T-cell (primary cell): ENCODE measurements at regions of chr1 and their contacts with region 1.

Region 1: GRCh38 chr1:182588500-182589452 is at the start of gene RNASEL:
- DNase-seq: peak; percentile 20 to 82 (median 48)
- ATAC-seq: peak; percentile 88 to 90 (median 89)
- H3K4me3 ChIP-seq: peak within 1 kb of the TSS; percentile 68 to 100
- H3K4me3 Mint-ChIP-seq: peak within 1 kb of the TSS; percentile 94 to 100 (median 98)
- H3K27ac ChIP-seq: peak within 1 kb of the TSS; percentile 93
- H3K27ac Mint-ChIP-seq: peak within 1 kb of the TSS; percentile 100
- H3K4me1 ChIP-seq: peaks cover 7 to 33% of the 10 kb centered on the region in 2 experiments
- H3K4me1 Mint-ChIP-seq: peaks cover 46 to 57% (median 54%) of the 10 kb centered on the region in 3 donors
- H3K27me3 ChIP-seq: no peaks in the 10 kb centered on the region
- H3K27me3 Mint-ChIP-seq: no peaks in the 10 kb centered on the region
- total RNA-seq, gene RNASEL: 10.5 to 20.8 (median 18.7) TPM

Region 2: GRCh38 chr1:182781841-182782586 is 193.2 kb after region 1 on chr1:
- CTCF ChIA-PET with region 1: interaction called, 161 to 257 read pairs
- POLR2A ChIA-PET with region 1: interaction called, 3 read pairs
- DNase-seq: peak; percentile 29 to 77 (median 52)
- ATAC-seq: peak; percentile 65 to 83 (median 82)
- H3K4me3 ChIP-seq: no peak overlapping the region
- H3K4me3 Mint-ChIP-seq: no peak overlapping the region
- H3K27ac ChIP-seq: no peak overlapping the region
- H3K27ac Mint-ChIP-seq: no peak overlapping the region
- H3K4me1 ChIP-seq: no peaks in the 10 kb centered on the region
- H3K4me1 Mint-ChIP-seq: peaks cover 4 to 10% (median 5%) of the 10 kb centered on the region in 3 donors
- H3K27me3 ChIP-seq: no peaks in the 10 kb centered on the region
- H3K27me3 Mint-ChIP-seq: no peaks in the 10 kb centered on the region

Region 3: DNA sequence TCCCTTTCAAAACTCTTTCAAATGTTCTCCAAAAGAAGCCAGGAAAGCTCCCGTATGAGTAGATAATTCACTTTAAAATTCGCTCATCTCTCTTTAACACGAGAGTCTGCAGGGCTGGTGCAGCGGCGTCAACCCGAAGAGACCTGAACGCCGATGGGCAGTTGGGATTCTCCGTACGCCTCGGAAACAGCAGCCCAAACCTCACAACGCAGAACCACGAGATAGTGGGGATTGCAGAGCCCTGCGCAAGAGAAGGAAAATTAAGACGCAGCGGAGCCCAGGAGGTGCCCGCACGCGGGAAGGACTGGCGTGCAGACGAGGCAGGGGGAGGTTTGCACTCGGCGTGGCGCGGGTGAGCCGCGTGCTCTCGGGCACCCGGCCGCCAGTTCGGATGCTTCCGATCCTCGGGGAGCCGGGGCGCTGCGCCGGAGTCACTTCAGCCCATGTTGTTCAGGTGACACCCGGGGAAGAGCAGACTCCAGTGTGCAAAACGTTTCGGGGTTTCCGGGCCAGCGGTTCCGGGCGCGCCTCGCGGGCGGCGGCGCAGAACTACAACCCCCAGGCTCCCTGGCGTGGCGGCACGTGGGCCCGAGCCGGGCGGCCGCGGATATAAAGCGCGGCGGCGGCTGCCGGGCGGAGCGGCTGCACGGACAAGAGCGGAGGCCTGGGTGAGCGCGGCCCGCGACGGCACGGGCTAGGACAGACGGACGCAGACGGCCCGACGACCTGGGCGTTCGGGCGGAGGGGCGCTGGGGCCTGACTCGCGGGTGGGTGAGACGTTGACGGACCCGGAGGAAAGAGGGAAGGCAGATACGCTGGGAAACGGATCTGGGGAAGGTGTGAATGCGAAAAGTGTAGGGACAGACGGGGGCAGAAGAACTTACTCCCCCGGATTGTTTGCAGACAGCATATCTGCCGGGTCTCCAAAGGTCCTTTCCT is 200.6 kb after region 1 on chr1 and contains the start of gene NPL:
- CTCF ChIA-PET with region 1: interaction called, 161 to 257 read pairs
- POLR2A ChIA-PET with region 1: interaction called, 3 to 6 read pairs
- DNase-seq: peak; percentile 74 to 92 (median 81)
- ATAC-seq: peak; percentile 98
- H3K4me3 ChIP-seq: peak within 1 kb of the TSS; percentile 73 to 79
- H3K4me3 Mint-ChIP-seq: peak within 1 kb of the TSS; percentile 88 to 94 (median 90)
- H3K27ac ChIP-seq: peak within 1 kb of the TSS; percentile 65
- H3K27ac Mint-ChIP-seq: peak within 1 kb of the TSS; percentile 84 to 90
- H3K4me1 ChIP-seq: peaks cover 9 to 10% of the 10 kb centered on the region in 2 experiments
- H3K4me1 Mint-ChIP-seq: peaks cover 7 to 15% (median 14%) of the 10 kb centered on the region in 3 donors
- H3K27me3 ChIP-seq: peaks cover 0 to 2% of the 10 kb centered on the region in 2 experiments
- H3K27me3 Mint-ChIP-seq: no peaks in the 10 kb centered on the region
- total RNA-seq, gene NPL: 2.5 to 5.4 (median 4.2) TPM